ENCODE measurements at regions of chr14 and their contacts with region 1.

Region 1: GRCh38 chr14:88044851-88045339 is 40.0 kb downstream of the GPR65 start:
- DNase-seq: peak; percentile 74 to 92 (median 92)
- H3K4me3 ChIP-seq: peak overlapping the region in 1 of 3 experiments; percentile 51
- H3K4me3 Mint-ChIP-seq: peak overlapping the region; percentile 37 to 54
- H3K27ac ChIP-seq: peak overlapping the region; percentile 91 to 94
- H3K27ac Mint-ChIP-seq: peak overlapping the region; percentile 97 to 99 (median 99)
- H3K4me1 ChIP-seq: peaks cover 72 to 79% of the 10 kb centered on the region in 2 donors
- H3K4me1 Mint-ChIP-seq: peaks cover 59% of the 10 kb centered on the region
- H3K27me3 ChIP-seq: no peaks in the 10 kb centered on the region
- H3K27me3 Mint-ChIP-seq: no peaks in the 10 kb centered on the region
- CTCF ChIP-seq: no peak

Region 2: DNA sequence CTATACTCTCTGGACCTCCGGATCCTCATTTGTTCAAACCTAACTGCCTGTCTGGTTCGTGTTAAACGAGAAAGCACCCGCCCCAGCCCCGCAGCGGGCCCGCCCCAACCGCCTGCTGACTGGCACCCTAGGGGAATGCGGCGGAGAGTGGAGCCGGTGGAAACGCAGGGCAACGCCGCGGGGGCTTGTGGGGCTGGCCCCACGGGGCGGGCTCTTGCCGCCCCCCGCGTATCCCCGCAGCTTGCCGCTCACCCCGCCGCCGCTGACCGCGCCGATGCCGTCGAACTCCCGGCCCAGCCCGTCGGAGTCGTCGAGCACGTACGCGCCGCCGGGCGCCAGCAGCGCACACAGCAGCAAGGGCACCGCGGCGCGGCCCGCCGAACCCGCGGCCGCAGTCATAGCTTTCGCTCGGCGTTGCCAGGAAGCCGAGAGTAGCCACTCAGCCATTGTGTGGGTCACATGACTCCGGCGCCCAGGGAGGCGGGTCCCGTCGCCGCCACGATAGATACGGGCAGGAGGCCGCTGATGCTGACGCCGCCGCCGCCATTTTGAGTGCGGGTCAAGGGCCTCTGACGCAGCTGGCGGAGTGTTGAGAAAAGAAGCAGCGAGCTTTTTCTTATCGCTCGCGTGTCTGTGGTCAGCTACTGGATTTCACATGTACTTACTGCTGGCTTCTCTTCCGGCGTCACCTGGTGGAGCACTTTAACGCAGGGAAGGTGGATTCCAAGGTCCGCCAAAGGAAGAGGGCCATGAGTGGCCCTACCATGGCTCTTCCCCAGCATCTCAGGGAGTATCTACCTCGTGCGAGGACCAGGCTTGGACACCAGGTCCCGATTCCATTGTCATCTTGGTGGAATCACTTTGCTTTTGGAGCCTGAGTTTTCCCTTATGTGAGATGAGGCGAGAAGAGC is 51.9 kb before region 1 on chr14 and contains the start of gene GALC:
- intact Hi-C with region 1: loop called in 1 of 2 experiments (anchors 10 kb)
- DNase-seq: peak; percentile 94 to 97 (median 94)
- H3K4me3 ChIP-seq: peak within 1 kb of the TSS; percentile 61 to 80 (median 78)
- H3K4me3 Mint-ChIP-seq: peak within 1 kb of the TSS; percentile 96 to 98
- H3K27ac ChIP-seq: peak within 1 kb of the TSS; percentile 88 to 95
- H3K27ac Mint-ChIP-seq: peak within 1 kb of the TSS; percentile 96 to 99 (median 98)
- H3K4me1 ChIP-seq: peaks cover 51 to 56% of the 10 kb centered on the region in 2 donors
- H3K4me1 Mint-ChIP-seq: peaks cover 62% of the 10 kb centered on the region
- H3K27me3 ChIP-seq: no peaks in the 10 kb centered on the region
- H3K27me3 Mint-ChIP-seq: no peaks in the 10 kb centered on the region
- CTCF ChIP-seq: no peak
- polyA plus RNA-seq, gene GALC: 28.6 to 40.6 (median 33.8) TPM

Region 3: GRCh38 chr14:88129306-88130056 is 84.6 kb after region 1 on chr14:
- intact Hi-C with region 1: loop called in 1 of 2 experiments (anchors 5 kb)
- DNase-seq: peak; percentile 76 to 89 (median 87)
- H3K4me3 ChIP-seq: peak overlapping the region; percentile 9 to 63 (median 57)
- H3K4me3 Mint-ChIP-seq: peak overlapping the region; percentile 60 to 83
- H3K27ac ChIP-seq: peak overlapping the region; percentile 18 to 88
- H3K27ac Mint-ChIP-seq: peak overlapping the region; percentile 89 to 96 (median 96)
- H3K4me1 ChIP-seq: peaks cover 31% of the 10 kb centered on the region in 2 donors
- H3K4me1 Mint-ChIP-seq: peaks cover 31% of the 10 kb centered on the region
- H3K27me3 ChIP-seq: no peaks in the 10 kb centered on the region
- H3K27me3 Mint-ChIP-seq: peaks cover 9 to 13% (median 13%) of the 10 kb centered on the region in 3 donors
- CTCF ChIP-seq: no peak

Region 4: GRCh38 chr14:88195676-88196075 is 150.8 kb after region 1 on chr14:
- intact Hi-C with region 1: no loop called
- DNase-seq: no peak
- H3K4me3 ChIP-seq: no peak overlapping the region
- H3K4me3 Mint-ChIP-seq: no peak overlapping the region
- H3K27ac ChIP-seq: no peak overlapping the region
- H3K27ac Mint-ChIP-seq: no peak overlapping the region
- H3K4me1 ChIP-seq: no peaks in the 10 kb centered on the region
- H3K4me1 Mint-ChIP-seq: no peaks in the 10 kb centered on the region
- H3K27me3 ChIP-seq: peaks cover 10 to 13% of the 10 kb centered on the region in 2 donors
- H3K27me3 Mint-ChIP-seq: peaks cover 8 to 20% (median 15%) of the 10 kb centered on the region in 3 donors
- CTCF ChIP-seq: no peak

Measured in CD14-positive monocyte (primary cell).